A549 (cell line): ENCODE measurements at regions of chr2 and their contacts with region 1.

Region 1: GRCh38 chr2:230847883-230848388 is 16.8 kb upstream of the ITM2C start:
- DNase-seq: peak; percentile 76 to 83
- ATAC-seq: peak; percentile 94 to 96
- H3K4me3 ChIP-seq: no peak overlapping the region
- H3K27ac ChIP-seq: peak overlapping the region in 1 of 2 experiments; percentile 48; a peak in 1 of 6 replicates
- H3K4me1 ChIP-seq: no peaks in the 10 kb centered on the region; the same call in 2 of the 3 replicates
- CTCF ChIP-seq: peak; percentile 87
- EP300 ChIP-seq: no peak
- POLR2A ChIP-seq: no peak
- RAD21 ChIP-seq: peak; percentile 49 to 65

Region 2: DNA sequence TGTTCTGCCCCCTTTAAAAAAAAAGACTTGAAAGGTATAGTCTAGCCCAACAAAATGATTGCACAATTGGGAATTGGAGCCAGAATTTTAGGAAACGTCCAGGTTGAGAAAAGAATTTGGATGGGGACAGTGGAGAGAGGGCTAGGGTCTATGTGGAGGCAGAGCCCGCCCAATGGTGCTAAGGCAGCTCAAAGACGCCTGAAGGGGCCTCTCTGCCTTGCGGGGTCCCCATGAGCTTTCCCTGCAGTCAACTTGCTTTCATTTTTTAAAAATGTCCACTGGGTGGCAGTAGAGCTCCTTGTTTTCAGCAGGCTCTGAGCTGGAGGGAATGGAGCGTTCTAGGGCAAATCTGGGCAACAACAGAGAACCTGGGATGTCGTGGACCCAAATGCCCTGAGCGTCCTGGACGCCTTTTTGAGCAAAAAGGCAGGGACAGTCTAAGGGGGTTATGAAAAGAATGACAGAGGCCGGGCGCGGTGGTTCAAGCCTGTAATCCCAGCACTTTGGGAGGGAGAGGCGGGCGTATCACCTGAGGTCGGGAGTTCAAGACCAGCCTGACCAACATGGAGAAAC is 23.4 kb before region 1 on chr2:
- CTCF ChIA-PET with region 1: interaction called, 30 read pairs
- POLR2A ChIA-PET with region 1: no interaction called
- DNase-seq: peak; percentile 46 to 81
- ATAC-seq: peak; percentile 83 to 96
- H3K4me3 ChIP-seq: no peak overlapping the region
- H3K27ac ChIP-seq: 0 out of 6 replicates have a peak overlapping the region, but pooled peaks of 1 of the 2 experiments have one; percentile 24
- H3K4me1 ChIP-seq: no peaks in the 10 kb centered on the region
- CTCF ChIP-seq: peak; percentile 80
- EP300 ChIP-seq: no peak
- POLR2A ChIP-seq: no peak
- RAD21 ChIP-seq: peak; percentile 84 to 90

Region 3: GRCh38 chr2:230830428-230830827 is 17.5 kb before region 1 on chr2:
- CTCF ChIA-PET with region 1: interaction called, 29 read pairs
- POLR2A ChIA-PET with region 1: no interaction called
- DNase-seq: no peak
- ATAC-seq: no peak
- H3K4me3 ChIP-seq: no peak overlapping the region
- H3K27ac ChIP-seq: no peak overlapping the region
- H3K4me1 ChIP-seq: no peaks in the 10 kb centered on the region
- CTCF ChIP-seq: no peak
- EP300 ChIP-seq: no peak
- POLR2A ChIP-seq: no peak
- RAD21 ChIP-seq: no peak

Region 4: GRCh38 chr2:230864598-230865306 is 16.8 kb after region 1 on chr2 and contains the start of gene ITM2C:
- CTCF ChIA-PET with region 1: interaction called, 20 read pairs
- POLR2A ChIA-PET with region 1: no interaction called
- DNase-seq: peak; percentile 65 to 76
- ATAC-seq: peak; percentile 80 to 91
- H3K4me3 ChIP-seq: peak within 1 kb of the TSS; percentile 80
- H3K27ac ChIP-seq: peak within 1 kb of the TSS; percentile 79 to 91
- H3K4me1 ChIP-seq: peaks cover 21% of the 10 kb centered on the region
- CTCF ChIP-seq: peak; percentile 69
- EP300 ChIP-seq: no peak
- POLR2A ChIP-seq: peak; percentile 81
- RAD21 ChIP-seq: peak in 1 of 2 experiments; percentile 41; a peak in 2 of 5 replicates
- polyA plus RNA-seq, gene ITM2C: 88.1 and 123 TPM in 2 replicates